ENCODE measurements at regions of chr20 and their contacts with region 1.

Region 1: DNA sequence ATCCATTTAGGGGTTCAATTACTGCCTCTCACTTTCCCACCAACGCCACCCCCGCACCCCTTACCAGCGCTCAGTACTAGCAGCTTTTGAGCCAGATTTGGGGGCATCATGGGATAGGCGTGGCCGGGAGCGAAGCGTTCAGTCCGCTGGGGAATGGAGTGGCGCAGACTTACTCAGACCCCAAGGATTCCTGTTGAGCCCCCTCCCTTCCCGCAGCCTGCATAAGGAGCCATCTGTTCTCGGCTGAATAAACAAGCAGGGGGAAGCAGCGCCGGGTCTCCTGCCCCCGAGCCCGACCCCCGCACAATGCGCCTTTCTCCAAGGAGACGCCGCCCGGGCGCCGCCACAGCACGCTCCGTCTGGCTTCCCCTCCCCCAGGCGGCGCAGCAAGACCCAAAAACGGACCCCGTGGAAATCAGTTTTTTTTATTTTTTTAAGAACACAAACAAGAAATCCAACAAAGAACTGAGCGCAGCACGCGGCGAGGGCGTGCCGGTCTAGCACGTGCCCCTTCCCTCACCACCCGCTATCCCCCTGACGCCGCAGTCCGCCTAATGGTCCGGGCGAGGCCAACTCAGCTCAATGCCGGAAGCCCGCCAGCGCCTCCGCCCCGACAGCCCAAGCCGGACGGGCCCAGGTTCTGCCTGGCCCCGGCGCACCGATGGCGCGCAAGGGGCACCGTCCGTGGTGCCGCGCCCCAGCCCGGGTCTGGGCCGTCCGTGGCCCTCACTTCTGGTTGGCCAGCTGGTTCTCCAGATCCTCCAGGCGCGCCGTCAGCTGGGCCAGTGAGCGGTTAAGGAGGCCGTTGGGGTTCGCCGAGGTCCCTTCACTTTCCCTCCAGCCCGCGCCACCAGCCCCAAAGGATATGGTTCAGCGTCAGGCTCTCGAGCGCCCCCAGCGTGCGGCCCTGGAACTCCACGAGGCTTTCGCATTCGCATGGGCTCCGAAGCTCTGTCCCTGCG is 13.3 kb upstream of the RBPJL start:
- DNase-seq: peak; percentile 82 to 95
- ATAC-seq: peak; percentile 78 to 91
- H3K4me3 ChIP-seq: peak overlapping the region; percentile 55
- H3K27ac ChIP-seq: peak overlapping the region; percentile 77 to 92
- H3K4me1 ChIP-seq: no peaks in the 10 kb centered on the region
- CTCF ChIP-seq: peak; percentile 76
- EP300 ChIP-seq: no peak
- POLR2A ChIP-seq: no peak
- RAD21 ChIP-seq: peak in 1 of 2 experiments; percentile 38; a peak in 2 of 5 replicates

Region 2: DNA sequence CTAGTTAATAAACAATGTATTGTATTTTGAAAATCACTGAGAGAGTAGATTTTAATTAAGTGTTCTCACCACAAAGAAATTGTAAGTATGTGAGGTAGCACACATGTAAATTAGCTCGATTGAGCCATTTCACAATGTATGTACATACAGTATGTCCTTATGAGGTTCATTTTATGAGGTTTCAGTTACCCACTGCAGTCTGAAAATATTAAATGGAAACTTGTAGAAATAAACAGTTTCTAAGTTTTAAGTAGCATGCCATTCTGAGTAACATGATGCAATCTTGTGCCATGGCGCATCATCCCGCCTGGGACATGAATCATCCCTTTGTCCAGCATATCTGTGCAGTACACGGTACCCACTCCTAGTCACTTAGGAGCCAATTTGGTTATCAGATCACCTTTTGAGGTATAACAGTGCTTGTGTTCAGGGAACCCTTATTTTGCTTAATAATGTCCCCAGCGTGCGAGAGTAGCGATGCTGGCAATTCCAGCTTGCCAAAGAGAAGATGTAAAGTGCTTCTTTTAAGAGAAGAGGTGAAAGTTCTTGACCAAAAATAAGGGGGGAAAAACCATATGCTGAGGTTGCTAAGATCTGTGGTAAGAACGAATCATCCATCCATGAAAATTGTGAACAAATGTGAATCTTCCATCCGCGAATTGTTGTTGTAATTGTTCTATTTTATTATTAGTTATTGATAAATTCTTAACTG is 257.1 kb before region 1 on chr20:
- CTCF ChIA-PET with region 1: interaction called, 106 read pairs
- POLR2A ChIA-PET with region 1: no interaction called
- DNase-seq: peak in 1 of 2 experiments; percentile 56
- ATAC-seq: peak; percentile 49 to 71; a peak in 2 of 6 replicates
- H3K4me3 ChIP-seq: no peak overlapping the region
- H3K27ac ChIP-seq: peak overlapping the region; percentile 67 to 84
- H3K4me1 ChIP-seq: peaks cover 39% of the 10 kb centered on the region
- CTCF ChIP-seq: no peak
- EP300 ChIP-seq: no peak
- POLR2A ChIP-seq: no peak
- RAD21 ChIP-seq: no peak

Region 3: DNA sequence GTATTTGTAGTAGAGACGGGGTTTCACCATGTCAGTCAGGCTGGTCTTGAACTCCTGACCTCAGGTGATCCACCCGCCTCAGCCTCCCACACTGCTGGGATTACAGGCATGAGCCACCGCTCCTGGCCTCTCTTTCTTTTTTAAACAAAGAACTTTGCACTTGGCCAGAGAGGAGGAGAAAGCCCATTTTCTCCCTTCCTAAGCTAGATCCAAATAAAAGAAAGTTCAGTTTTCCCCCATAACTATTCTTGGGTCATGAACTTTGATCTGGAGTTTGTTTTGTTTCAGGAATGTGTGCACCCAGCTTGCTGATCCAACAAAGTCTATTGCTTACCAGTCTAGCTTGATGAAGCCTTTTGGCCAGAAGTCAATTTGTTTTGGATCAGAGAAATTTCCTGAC is 215.8 kb before region 1 on chr20:
- CTCF ChIA-PET with region 1: interaction called, 14 read pairs
- POLR2A ChIA-PET with region 1: no interaction called
- DNase-seq: no peak
- ATAC-seq: no peak
- H3K4me3 ChIP-seq: no peak overlapping the region
- H3K27ac ChIP-seq: no peak overlapping the region
- H3K4me1 ChIP-seq: no peaks in the 10 kb centered on the region
- CTCF ChIP-seq: no peak
- EP300 ChIP-seq: no peak
- POLR2A ChIP-seq: no peak
- RAD21 ChIP-seq: no peak

Region 4: GRCh38 chr20:45111799-45112471 is 181.4 kb before region 1 on chr20:
- CTCF ChIA-PET with region 1: interaction called, 21 read pairs
- POLR2A ChIA-PET with region 1: no interaction called
- DNase-seq: peak in 1 of 2 experiments; percentile 20
- ATAC-seq: peak in 1 of 2 experiments; percentile 59; a peak in 3 of 6 replicates
- H3K4me3 ChIP-seq: no peak overlapping the region
- H3K27ac ChIP-seq: no peak overlapping the region
- H3K4me1 ChIP-seq: no peaks in the 10 kb centered on the region
- CTCF ChIP-seq: peak; percentile 60
- EP300 ChIP-seq: no peak
- POLR2A ChIP-seq: no peak
- RAD21 ChIP-seq: peak; percentile 44 to 45; a peak in 4 of 5 replicates

Region 5: GRCh38 chr20:45257711-45258110 is 35.6 kb before region 1 on chr20:
- CTCF ChIA-PET with region 1: interaction called, 12 read pairs
- POLR2A ChIA-PET with region 1: no interaction called
- DNase-seq: no peak
- ATAC-seq: no peak
- H3K4me3 ChIP-seq: no peak overlapping the region
- H3K27ac ChIP-seq: no peak overlapping the region
- H3K4me1 ChIP-seq: peaks cover 23% of the 10 kb centered on the region
- CTCF ChIP-seq: no peak
- EP300 ChIP-seq: no peak
- POLR2A ChIP-seq: no peak
- RAD21 ChIP-seq: no peak

Region 6: GRCh38 chr20:45311589-45312211 is 18.4 kb after region 1 on chr20:
- CTCF ChIA-PET with region 1: interaction called, 16 read pairs
- POLR2A ChIA-PET with region 1: no interaction called
- DNase-seq: peak; percentile 75 to 78
- ATAC-seq: peak; percentile 79 to 94
- H3K4me3 ChIP-seq: no peak overlapping the region; the same call in 2 of the 3 replicates
- H3K27ac ChIP-seq: peak overlapping the region in 1 of 2 experiments; percentile 41; a peak in 1 of 6 replicates
- H3K4me1 ChIP-seq: no peaks in the 10 kb centered on the region
- CTCF ChIP-seq: peak; percentile 77
- EP300 ChIP-seq: no peak
- POLR2A ChIP-seq: no peak
- RAD21 ChIP-seq: peak; percentile 60 to 68

Region 7: GRCh38 chr20:45362804-45363610 is 69.7 kb after region 1 on chr20 and contains the start of gene SYS1:
- CTCF ChIA-PET with region 1: interaction called, 10 read pairs
- POLR2A ChIA-PET with region 1: no interaction called
- DNase-seq: peak; percentile 95 to 98
- ATAC-seq: peak; percentile 94 to 95
- H3K4me3 ChIP-seq: peak within 1 kb of the TSS; percentile 64
- H3K27ac ChIP-seq: peak within 1 kb of the TSS; percentile 95 to 97
- H3K4me1 ChIP-seq: peaks cover 27% of the 10 kb centered on the region; the same call in 2 of the 3 replicates
- CTCF ChIP-seq: peak; percentile 92
- EP300 ChIP-seq: no peak
- POLR2A ChIP-seq: peak; percentile 69
- RAD21 ChIP-seq: peak; percentile 85 to 87
- polyA plus RNA-seq, gene SYS1: 27.6 and 30.5 TPM in 2 replicates